PC-9 (cell line): ENCODE measurements at regions of chr17 and their contacts with region 1.

Region 1: GRCh38 chr17:40909351-40909750 is 24.3 kb upstream of the KRT20 start:
- DNase-seq: peak; percentile 79 to 92
- H3K4me3 ChIP-seq: 0 out of 2 replicates have a peak overlapping the region, but pooled peaks have one; percentile 16
- H3K27ac ChIP-seq: peak overlapping the region; percentile 95
- H3K4me1 ChIP-seq: peaks cover 66% of the 10 kb centered on the region
- H3K27me3 ChIP-seq: no peaks in the 10 kb centered on the region
- CTCF ChIP-seq: peak; percentile 86

Region 2: DNA sequence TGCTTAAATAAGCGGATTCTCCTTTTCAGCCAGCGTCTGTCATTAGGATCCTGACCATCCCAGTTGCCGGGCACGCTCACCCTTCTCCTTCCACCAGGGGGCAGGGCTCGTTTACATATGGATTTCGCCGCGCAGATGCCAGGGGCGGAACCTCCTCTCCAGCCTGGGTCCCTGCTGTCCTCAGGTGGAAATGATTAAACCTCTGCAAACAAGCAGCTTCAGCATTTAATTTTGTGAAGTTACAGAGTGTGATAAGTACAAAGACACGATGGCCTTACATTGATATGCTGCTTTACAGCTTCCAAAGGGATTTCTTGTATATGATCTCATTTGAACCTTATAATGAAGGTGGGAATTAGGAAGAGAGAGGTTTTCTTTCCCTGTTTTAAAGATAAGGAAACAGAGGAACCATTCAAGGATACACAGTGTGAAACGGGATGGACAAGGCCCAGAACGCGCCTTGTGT is 105.7 kb before region 1 on chr17:
- CTCF ChIA-PET with region 1: no interaction called
- POLR2A ChIA-PET with region 1: no interaction called
- intact Hi-C with region 1: loop called (anchors 1 kb)
- DNase-seq: peak; percentile 74 to 82
- H3K4me3 ChIP-seq: no peak overlapping the region
- H3K27ac ChIP-seq: 0 out of 2 replicates have a peak overlapping the region, but pooled peaks have one; percentile 18
- H3K4me1 ChIP-seq: peaks cover 9% of the 10 kb centered on the region
- H3K27me3 ChIP-seq: no peaks in the 10 kb centered on the region
- CTCF ChIP-seq: peak; percentile 94

Region 3: DNA sequence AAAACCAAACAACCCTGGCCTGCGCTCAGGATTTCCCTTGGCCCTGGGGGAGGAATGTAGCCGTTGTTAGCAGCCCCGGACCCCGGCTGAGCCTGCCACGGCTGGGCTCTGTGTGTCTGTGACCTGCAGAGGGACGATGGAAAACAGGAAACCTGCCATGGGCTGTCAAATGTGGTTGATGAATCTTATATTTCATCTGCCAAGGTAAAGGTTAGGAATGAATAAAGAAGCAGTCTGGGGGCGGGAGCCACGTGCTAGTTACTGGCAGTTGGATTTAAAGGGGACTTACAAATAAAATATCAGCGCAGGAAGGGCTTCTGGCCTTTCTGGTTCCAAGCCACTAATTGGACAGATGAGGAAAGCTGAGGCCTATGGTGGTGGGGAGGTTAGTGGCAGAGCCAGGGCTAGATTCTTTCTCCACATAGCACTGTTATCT is 28.1 kb after region 1 on chr17 and contains the start of gene KRT23:
- CTCF ChIA-PET with region 1: no interaction called
- POLR2A ChIA-PET with region 1: no interaction called
- intact Hi-C with region 1: no loop called
- DNase-seq: peak in 1 of 2 experiments; percentile 37
- H3K4me3 ChIP-seq: peak within 1 kb of the TSS; percentile 59
- H3K27ac ChIP-seq: peak within 1 kb of the TSS; percentile 71
- H3K4me1 ChIP-seq: peaks cover 28% of the 10 kb centered on the region; the same call in 1 of the 2 replicates
- H3K27me3 ChIP-seq: no peaks in the 10 kb centered on the region
- CTCF ChIP-seq: no peak
- total RNA-seq, gene KRT23: not detected in 2 replicates

Region 4: DNA sequence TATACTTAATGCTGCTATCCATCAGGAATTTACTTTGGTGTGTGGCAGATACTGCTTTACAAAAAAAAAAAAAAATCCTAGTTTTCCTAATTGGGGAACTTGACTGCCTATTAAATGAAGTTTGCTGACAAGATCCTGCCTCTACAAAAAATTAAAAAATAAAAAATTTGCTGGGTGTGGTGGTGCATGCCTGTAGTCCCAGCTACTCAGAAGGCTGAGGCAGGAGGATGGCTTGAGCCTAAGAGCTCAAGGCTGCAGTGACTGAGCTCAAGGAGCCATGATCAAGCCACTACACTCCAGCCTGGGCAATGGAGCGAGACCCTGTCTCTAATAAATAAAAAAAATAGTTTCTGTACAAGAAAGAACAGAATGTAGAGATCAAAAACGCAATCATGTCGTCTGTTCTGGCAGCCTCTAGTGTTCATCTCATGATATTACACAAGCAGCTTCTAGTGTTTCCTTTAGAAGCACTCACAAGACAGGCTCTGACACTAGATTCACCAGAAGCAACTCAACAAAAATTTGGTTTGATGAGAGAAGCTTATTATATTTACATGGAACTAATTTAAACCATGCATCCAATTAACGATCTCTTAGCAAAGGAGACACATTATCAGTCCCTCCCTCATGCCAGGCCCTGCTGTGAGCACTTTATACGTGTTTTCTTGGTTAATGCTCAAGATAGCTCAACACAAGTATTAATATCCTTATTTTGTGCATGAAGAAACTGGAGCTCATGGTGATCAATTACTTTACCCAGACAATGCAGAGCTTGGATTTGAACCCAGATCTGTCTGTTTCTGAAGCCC is 412.9 kb after region 1 on chr17:
- CTCF ChIA-PET with region 1: interaction called, 7 read pairs
- POLR2A ChIA-PET with region 1: no interaction called
- intact Hi-C with region 1: loop called (anchors 1 kb)
- DNase-seq: peak in 1 of 2 experiments; percentile 22
- H3K4me3 ChIP-seq: no peak overlapping the region
- H3K27ac ChIP-seq: no peak overlapping the region
- H3K4me1 ChIP-seq: no peaks in the 10 kb centered on the region
- H3K27me3 ChIP-seq: no peaks in the 10 kb centered on the region
- CTCF ChIP-seq: peak; percentile 80

Region 5: GRCh38 chr17:41403798-41404671 is 494.7 kb after region 1 on chr17:
- CTCF ChIA-PET with region 1: no interaction called
- POLR2A ChIA-PET with region 1: no interaction called
- intact Hi-C with region 1: loop called (anchors 5 kb)
- DNase-seq: peak; percentile 66 to 97
- H3K4me3 ChIP-seq: no peak overlapping the region
- H3K27ac ChIP-seq: peak overlapping the region; percentile 89
- H3K4me1 ChIP-seq: peaks cover 48% of the 10 kb centered on the region
- H3K27me3 ChIP-seq: no peaks in the 10 kb centered on the region
- CTCF ChIP-seq: no peak

Region 6: DNA sequence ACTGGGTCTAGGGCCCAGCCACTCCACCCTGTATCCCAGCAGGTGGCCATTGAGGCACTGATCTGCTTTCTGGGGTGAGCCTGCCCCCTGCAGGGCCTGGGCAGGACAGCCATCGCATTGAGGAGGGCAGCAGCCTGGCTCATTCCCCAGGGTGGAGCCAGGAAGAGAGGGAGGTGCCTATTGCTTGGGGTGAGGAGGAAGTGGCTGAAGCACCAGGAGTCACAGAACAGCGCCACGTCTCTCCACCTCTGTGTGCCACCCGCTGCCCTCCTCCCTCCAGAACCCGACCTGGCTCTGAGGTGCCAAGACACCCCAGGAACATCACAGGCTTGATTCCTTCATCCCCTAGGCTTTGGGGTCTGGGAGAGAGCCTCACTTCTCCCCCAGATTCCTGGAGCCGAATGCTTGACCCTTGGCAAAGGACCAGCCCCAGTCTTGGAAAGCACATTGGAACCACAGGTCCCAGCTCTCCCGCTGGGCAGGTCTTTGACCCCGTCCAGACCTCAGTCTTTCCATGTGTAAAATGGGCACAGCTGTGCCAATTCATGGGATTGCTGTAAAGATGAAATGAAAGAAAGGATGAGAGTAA is 587.6 kb after region 1 on chr17:
- CTCF ChIA-PET with region 1: no interaction called
- POLR2A ChIA-PET with region 1: interaction called, 15 read pairs
- intact Hi-C with region 1: loop called (anchors 1 kb)
- DNase-seq: peak; percentile 82 to 87
- H3K4me3 ChIP-seq: no peak overlapping the region
- H3K27ac ChIP-seq: no peak overlapping the region; the same call in 1 of the 2 replicates
- H3K4me1 ChIP-seq: peaks cover 83% of the 10 kb centered on the region
- H3K27me3 ChIP-seq: no peaks in the 10 kb centered on the region
- CTCF ChIP-seq: peak; percentile 86

Region 7: DNA sequence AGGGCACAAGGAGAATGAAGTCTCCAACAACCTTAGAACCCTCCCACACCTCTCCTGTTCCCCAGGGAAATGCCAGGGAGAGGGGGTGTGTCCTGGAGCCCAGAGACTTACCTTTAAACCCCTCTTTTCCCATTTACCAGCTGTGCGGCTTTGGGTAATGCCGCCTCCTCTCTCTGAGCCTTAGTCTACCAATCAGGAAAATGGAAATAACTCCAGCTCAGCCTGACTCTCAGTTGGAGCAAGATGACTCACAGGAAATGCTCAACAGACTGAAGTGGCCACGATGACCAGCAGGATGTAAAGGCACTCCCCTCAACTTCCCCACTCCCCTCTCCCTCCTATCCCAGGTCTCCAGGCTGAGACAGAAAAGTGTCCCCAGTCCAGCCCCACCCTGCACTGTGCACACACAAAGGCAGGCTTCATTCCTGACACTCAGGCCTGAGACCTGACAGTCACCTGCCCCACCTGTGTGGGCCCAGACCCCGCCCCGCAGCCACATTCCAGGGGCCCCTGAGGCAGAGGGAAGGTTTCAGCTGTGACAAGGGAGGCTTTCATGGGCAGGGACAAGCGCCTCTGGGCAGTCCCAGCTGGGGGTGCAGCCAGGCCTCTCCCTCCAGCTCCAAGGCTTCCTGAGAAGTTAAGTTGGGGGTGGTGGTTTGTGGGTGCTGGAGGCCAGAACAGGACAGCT is 612.4 kb after region 1 on chr17:
- CTCF ChIA-PET with region 1: no interaction called
- POLR2A ChIA-PET with region 1: interaction called, 7 read pairs
- intact Hi-C with region 1: loop called (anchors 1 kb)
- DNase-seq: peak; percentile 97 to 98
- H3K4me3 ChIP-seq: peak overlapping the region; percentile 93; the same call in 1 of the 2 replicates
- H3K27ac ChIP-seq: peak overlapping the region; percentile 95
- H3K4me1 ChIP-seq: peaks cover 81% of the 10 kb centered on the region
- H3K27me3 ChIP-seq: no peaks in the 10 kb centered on the region
- CTCF ChIP-seq: no peak

Region 8: GRCh38 chr17:41678907-41679739 is 769.8 kb after region 1 on chr17:
- CTCF ChIA-PET with region 1: no interaction called
- POLR2A ChIA-PET with region 1: interaction called, 17 read pairs
- intact Hi-C with region 1: no loop called
- DNase-seq: peak; percentile 67 to 88
- H3K4me3 ChIP-seq: peak overlapping the region; percentile 50
- H3K27ac ChIP-seq: peak overlapping the region; percentile 94
- H3K4me1 ChIP-seq: peaks cover 24% of the 10 kb centered on the region
- H3K27me3 ChIP-seq: no peaks in the 10 kb centered on the region
- CTCF ChIP-seq: peak; percentile 28; the same call in 1 of the 2 replicates